ENCODE measurements at regions of chr13 and their contacts with region 1.

Region 1: DNA sequence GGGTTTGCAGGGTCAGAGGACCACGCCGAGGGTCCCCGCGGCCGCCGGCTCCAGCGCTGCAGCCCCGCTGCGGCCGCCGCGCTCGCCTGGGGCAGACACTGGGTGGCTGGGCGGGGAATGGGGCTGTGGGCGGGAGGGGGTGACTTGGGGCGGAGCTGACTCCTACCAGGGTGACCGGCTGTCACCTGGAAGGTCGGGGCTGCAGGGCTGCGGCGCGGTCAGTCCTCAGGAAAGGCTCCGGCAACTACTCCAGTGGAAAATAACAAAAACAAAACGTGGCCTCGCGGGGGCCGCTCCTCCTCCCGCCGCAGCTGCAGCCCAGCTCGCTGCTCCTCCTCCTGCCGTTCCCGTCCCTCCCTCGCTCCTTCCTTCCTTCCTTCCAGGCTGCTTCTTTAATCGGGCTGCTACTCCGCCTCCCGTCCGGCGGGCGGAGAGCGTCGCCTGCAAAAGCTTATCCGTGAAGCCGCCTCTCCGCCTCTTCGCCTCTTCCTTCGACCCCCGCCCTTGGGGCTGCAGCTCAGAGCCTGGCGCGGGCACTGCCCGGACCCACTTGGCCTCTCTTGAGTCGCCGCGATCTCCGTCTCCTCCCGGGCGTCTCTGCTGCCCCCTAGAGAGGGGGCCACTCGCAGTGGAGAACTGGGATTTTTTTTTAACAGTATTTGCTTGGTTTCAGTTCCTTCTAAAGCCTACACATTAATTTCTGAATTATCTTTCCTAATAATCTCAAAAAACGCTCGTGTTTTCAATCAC is at the start of gene TBC1D4:
- DNase-seq: peak; percentile 92
- H3K4me3 Mint-ChIP-seq: peak within 1 kb of the TSS; percentile 81
- H3K27ac Mint-ChIP-seq: peak within 1 kb of the TSS; percentile 47
- H3K4me1 Mint-ChIP-seq: no peaks in the 10 kb centered on the region
- H3K27me3 Mint-ChIP-seq: no peaks in the 10 kb centered on the region
- CTCF ChIP-seq: peak; percentile 61
- total RNA-seq, gene TBC1D4: 6.6 and 9.3 TPM in 2 replicates

Region 2: DNA sequence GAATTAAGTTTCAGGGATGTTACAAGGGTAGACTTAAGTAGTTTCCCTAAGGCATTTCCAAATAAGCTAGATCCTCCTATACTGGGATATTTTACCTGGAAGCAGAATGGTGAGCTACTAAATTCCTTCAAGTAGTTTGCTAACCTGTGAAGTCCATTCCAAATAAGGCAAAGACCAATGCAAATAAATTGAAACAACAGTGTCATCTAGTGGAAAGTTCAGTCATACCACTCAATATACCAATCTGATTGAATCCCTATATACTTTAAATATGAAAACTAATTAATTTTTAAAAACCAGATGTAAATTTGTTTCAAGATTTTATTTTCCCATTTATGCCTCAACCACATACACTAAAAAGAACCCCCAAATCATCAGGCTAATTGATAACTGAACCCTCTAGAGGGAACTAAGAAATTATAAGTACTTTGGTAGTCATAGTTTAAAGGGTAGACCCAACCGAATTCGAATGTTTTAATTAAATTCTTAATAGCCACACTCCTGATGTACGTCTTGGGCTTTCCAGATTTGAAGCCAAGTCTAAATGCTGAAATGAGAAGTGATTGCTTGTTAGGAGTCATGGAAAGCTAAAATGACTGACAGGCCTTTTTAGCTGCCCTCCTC is 224.0 kb before region 1 on chr13:
- CTCF ChIA-PET with region 1: interaction called, 4 read pairs
- POLR2A ChIA-PET with region 1: no interaction called
- intact Hi-C with region 1: loop called (anchors 10 kb)
- DNase-seq: peak; percentile 70
- H3K4me3 Mint-ChIP-seq: no peak overlapping the region
- H3K27ac Mint-ChIP-seq: no peak overlapping the region
- H3K4me1 Mint-ChIP-seq: peaks cover 10% of the 10 kb centered on the region
- H3K27me3 Mint-ChIP-seq: no peaks in the 10 kb centered on the region
- CTCF ChIP-seq: peak; percentile 67

Region 3: DNA sequence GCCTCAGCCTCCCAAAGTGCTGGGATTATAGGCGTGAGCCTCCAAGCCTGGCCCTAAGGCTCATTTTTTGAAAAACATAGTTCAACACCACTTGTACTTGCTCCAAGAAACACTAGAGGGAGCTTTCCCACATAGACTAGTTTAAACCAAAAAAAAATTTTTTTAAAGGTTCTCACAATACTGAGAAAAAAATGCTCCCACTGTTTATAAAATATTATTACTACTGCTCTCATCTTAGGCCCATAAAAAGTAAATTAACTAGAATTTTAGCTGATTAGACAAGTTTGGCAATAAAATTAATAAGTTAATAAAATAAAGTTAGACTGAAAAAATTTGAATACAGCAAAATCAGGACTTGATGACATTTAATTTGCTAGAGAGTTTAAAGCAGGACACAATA is 109.7 kb before region 1 on chr13:
- CTCF ChIA-PET with region 1: interaction called, 176 read pairs
- POLR2A ChIA-PET with region 1: interaction called, 40 read pairs
- intact Hi-C with region 1: loop called (anchors 1 kb)
- DNase-seq: peak; percentile 66
- H3K4me3 Mint-ChIP-seq: no peak overlapping the region
- H3K27ac Mint-ChIP-seq: no peak overlapping the region
- H3K4me1 Mint-ChIP-seq: peaks cover 13% of the 10 kb centered on the region
- H3K27me3 Mint-ChIP-seq: no peaks in the 10 kb centered on the region
- CTCF ChIP-seq: peak; percentile 58

Region 4: GRCh38 chr13:75416327-75417005 is 65.8 kb before region 1 on chr13:
- CTCF ChIA-PET with region 1: interaction called, 17 read pairs
- POLR2A ChIA-PET with region 1: interaction called, 11 read pairs
- intact Hi-C with region 1: loop called (anchors 2 kb)
- DNase-seq: no peak
- H3K4me3 Mint-ChIP-seq: no peak overlapping the region
- H3K27ac Mint-ChIP-seq: no peak overlapping the region
- H3K4me1 Mint-ChIP-seq: peaks cover 46% of the 10 kb centered on the region
- H3K27me3 Mint-ChIP-seq: no peaks in the 10 kb centered on the region
- CTCF ChIP-seq: no peak

Region 5: GRCh38 chr13:75452564-75452963 is 29.7 kb before region 1 on chr13:
- CTCF ChIA-PET with region 1: interaction called, 11 read pairs
- POLR2A ChIA-PET with region 1: interaction called, 16 read pairs
- intact Hi-C with region 1: no loop called
- DNase-seq: peak; percentile 61
- H3K4me3 Mint-ChIP-seq: peak overlapping the region; percentile 69
- H3K27ac Mint-ChIP-seq: peak overlapping the region; percentile 83
- H3K4me1 Mint-ChIP-seq: peaks cover 23% of the 10 kb centered on the region
- H3K27me3 Mint-ChIP-seq: no peaks in the 10 kb centered on the region
- CTCF ChIP-seq: no peak

Region 6: DNA sequence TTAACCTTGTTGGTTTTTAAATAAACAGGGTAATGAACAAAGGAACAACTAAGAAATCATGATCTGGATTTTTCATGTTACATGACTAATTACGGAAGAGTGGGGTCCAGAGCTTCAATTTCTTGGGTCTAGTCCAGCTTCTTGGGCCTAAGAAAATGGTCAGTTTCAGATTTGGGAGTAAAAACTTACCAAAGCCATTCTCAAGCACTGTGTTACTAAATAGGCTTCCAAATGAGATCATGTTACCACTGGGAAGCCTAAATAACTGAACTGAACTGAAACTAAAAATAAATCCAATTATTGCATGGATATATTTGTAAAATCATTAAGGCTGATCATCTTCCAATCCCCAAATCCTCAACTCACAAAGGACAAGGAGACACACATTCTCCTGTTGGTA is 14.1 kb before region 1 on chr13:
- CTCF ChIA-PET with region 1: interaction called, 11 read pairs
- POLR2A ChIA-PET with region 1: interaction called, 17 read pairs
- intact Hi-C with region 1: no loop called
- DNase-seq: no peak
- H3K4me3 Mint-ChIP-seq: no peak overlapping the region
- H3K27ac Mint-ChIP-seq: no peak overlapping the region
- H3K4me1 Mint-ChIP-seq: peaks cover 11% of the 10 kb centered on the region
- H3K27me3 Mint-ChIP-seq: no peaks in the 10 kb centered on the region
- CTCF ChIP-seq: no peak